ENCODE measurements at regions of chr10 and their contacts with region 1.

Region 1: DNA sequence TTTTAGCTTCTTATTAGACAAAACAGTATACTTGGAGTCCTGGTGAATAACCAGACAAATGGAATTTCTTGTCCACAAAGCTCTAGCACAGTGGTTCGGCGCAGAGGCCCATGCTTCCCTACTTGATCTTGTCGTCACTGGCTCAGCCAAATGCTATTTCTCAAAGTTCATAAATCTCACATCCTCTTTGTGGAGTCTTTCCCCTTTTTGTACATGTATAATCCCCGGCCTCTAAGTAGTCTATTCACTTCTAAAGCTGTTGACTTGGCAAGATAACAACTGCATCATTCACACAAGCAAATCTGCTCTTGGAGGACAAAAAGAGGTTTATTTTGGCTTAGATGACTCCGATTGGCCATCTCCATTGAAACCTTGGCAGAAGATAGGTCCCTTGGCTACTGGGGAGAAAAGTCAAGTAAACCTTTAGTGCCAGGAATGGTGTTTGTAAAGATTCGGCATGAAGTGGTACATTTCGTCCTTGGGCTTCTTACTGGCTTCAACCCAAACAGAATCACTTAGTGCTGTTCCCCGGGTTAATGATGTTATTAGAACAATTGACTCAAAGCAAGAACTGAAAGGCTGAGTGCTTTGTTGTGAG is 5.1 kb upstream of the AKR1E2 start:
- DNase-seq: no peak
- ATAC-seq: peak; percentile 76
- H3K4me3 ChIP-seq: no peak overlapping the region
- H3K27ac ChIP-seq: no peak overlapping the region
- H3K4me1 ChIP-seq: no peaks in the 10 kb centered on the region
- H3K27me3 ChIP-seq: no peaks in the 10 kb centered on the region
- CTCF ChIP-seq: no peak

Region 2: DNA sequence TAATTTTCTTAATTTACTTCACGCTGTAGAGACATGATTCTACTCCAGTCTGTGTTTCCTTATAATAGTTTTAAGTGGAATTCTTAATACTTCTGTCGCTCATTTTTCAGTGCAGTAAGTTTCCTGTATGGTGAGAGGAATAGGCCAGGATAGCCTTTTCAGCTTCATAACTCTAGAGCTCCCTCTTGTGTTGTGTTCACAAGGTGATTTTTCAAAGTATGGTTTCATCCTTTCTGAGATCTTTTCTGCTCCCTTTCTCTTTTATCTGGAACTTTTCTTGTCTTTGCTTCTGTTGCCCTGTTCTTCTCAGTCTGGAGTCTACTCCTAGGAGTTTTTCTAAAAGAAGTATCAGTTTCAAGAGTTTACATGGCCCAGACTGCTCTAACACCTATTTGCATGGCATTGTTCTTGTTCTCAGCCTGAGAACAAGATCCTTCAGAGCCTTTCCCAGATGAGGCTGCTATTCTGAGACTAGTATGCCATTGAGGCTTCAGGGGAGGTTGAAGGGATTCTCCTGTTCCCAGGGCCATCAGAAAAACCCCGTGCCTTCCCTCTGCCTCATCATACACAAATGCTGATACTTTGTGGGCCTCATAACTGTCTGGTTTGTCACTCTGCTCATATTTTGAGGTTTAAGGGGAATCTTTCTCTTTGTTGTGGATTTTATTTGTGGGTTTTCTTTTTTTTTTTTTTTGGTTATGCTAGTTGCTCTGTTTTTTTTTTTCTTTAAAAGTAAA is 613.3 kb after region 1 on chr10:
- intact Hi-C with region 1: loop called (anchors 5 kb)
- DNase-seq: no peak
- ATAC-seq: peak; percentile 82
- H3K4me3 ChIP-seq: no peak overlapping the region
- H3K27ac ChIP-seq: no peak overlapping the region
- H3K4me1 ChIP-seq: no peaks in the 10 kb centered on the region
- H3K27me3 ChIP-seq: no peaks in the 10 kb centered on the region
- CTCF ChIP-seq: peak; percentile 69